ENCODE measurements at regions of chr3 and their contacts with region 1.

Region 1: GRCh38 chr3:78659386-78659987 is 1108.3 kb downstream of the ROBO1 start:
- DNase-seq: no peak
- H3K4me3 Mint-ChIP-seq: no peak overlapping the region
- H3K27ac Mint-ChIP-seq: no peak overlapping the region
- H3K4me1 Mint-ChIP-seq: no peaks in the 10 kb centered on the region
- H3K27me3 Mint-ChIP-seq: no peaks in the 10 kb centered on the region

Region 2: DNA sequence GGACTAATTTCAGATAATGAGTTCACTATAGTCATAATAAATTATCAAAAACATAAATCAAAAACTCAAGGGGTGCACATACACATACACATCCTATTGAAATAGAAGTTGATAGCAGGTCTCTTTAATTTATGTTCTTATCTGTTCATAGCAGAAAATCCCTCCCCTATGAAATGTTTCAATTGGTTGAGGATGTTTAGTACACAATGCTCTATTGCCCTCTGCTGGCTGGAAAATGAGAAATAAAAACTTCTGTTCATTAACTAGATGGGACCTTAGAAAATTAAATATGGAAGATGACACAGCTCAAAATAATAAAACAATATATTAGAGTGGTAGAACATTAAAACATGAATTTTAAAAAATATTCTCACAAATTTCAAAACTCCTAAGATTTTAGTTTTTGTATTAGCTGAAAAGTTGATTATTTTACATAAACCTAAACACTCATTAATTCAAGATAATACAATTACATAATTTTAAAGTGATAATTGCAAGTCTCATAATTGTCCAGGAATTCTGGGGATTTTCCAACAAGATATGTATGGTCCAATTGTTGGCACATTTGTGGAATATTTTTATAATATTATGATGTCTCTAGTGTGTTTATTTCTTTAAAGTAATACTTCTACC is 373.3 kb after region 1 on chr3:
- intact Hi-C with region 1: loop called (anchors 2 kb)
- DNase-seq: no peak
- H3K4me3 Mint-ChIP-seq: no peak overlapping the region
- H3K27ac Mint-ChIP-seq: no peak overlapping the region
- H3K4me1 Mint-ChIP-seq: no peaks in the 10 kb centered on the region
- H3K27me3 Mint-ChIP-seq: no peaks in the 10 kb centered on the region

Region 3: DNA sequence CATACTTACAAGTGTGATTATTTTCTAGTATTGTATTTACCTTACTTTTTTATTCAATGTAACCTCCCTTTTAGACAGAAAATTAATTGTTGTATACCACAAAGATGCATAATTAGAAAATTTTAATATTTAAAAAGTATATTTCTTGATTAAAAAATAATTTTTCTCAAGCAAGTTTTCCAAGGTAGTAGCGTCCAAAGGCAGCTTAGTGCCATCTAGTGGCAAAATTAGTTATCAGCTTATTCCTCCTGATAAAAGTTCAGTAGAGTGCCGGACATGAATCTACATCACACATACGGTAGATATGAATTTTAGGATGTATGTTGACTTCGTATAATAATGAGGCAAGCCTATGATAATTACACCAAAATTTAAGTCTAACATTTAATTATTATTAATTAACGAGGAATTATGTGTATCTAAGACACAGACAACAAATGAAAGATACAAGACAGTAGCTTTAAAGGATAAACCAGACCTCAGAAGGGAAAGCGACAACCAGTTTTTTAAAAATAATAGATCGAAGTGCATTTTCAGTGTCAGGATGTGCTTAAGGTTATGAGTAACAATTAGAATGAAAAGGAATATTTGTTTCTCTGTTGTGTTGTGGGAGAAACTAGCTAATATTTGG is 702.4 kb after region 1 on chr3:
- intact Hi-C with region 1: loop called (anchors 5 kb)
- DNase-seq: no peak
- H3K4me3 Mint-ChIP-seq: no peak overlapping the region
- H3K27ac Mint-ChIP-seq: no peak overlapping the region
- H3K4me1 Mint-ChIP-seq: no peaks in the 10 kb centered on the region
- H3K27me3 Mint-ChIP-seq: no peaks in the 10 kb centered on the region

Measured in activated T-helper 2 cell treated with anti-CD3 and anti-CD28 coated beads, Interferon-gamma antibody, Interleukin-2, Interleukin-4, amounts not matched to agents 10 μg/mL and 5 μg/mL and 100 μg/mL, durations not matched to agents 14 hours and 24 hours and 36 hours (primary cell).